ENCODE measurements at regions of chr19 and their contacts with region 1.

Region 1: DNA sequence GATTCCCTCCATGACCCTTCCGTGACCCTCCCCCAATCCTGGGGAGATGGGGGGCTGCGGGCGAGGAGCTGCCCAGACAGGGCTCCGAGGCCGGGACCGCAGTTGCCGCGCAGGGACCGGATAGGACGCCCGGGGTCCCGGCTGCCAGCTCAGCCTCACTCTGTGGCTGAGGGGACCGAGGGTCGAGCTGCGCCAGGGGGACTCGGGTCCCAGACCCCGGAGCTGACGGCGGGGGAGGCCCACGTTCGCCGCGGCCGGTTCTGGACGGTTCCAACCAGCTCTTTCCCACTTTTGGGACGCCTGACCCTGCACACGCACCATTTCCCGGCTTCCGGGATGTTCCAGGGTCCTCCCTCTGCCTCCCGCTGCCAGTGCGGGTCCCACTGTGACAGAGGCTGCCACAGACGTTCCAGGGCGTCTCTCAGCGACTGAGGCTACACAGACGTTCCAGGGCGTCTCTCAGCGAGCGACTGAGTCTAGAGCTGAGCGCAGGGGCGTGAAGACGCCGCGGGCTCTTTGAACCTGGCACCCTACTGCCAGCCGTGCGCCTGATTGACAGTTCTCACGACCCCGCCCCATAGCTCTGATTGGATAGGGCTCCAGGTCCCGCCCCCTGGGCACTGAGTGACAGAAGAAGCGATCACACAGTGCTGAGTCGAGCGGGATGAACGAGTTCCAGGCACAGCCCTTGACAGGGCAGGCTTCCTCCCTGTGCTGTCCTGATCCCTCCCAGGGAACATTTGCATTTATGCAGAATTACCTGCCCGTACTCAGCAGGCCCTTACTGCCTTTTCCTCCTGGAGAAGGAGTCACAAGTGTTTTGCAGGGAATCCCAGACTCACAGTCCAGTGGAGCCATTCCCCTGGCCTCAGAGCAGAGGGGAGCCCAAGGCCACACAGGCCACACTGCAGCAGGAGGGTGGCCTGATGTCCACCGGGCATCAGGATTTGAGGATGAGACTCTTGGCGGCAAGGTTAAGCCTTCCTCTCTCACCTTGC is at the start of gene ZNF563:
- DNase-seq: peak; percentile 97
- ATAC-seq: peak; percentile 96 to 98 (median 98)
- H3K4me3 ChIP-seq: peak within 1 kb of the TSS; percentile 73
- H3K4me3 Mint-ChIP-seq: peak within 1 kb of the TSS; percentile 99
- H3K27ac ChIP-seq: peak within 1 kb of the TSS; percentile 81
- H3K27ac Mint-ChIP-seq: peak within 1 kb of the TSS; percentile 91 to 97
- H3K4me1 ChIP-seq: peaks cover 19% of the 10 kb centered on the region
- H3K4me1 Mint-ChIP-seq: peaks cover 26 to 30% of the 10 kb centered on the region in 2 donors
- H3K27me3 ChIP-seq: no peaks in the 10 kb centered on the region
- H3K27me3 Mint-ChIP-seq: no peaks in the 10 kb centered on the region
- CTCF ChIP-seq: no peak
- total RNA-seq, gene ZNF563: 0.78 to 1.00 (median 0.80) TPM

Region 2: DNA sequence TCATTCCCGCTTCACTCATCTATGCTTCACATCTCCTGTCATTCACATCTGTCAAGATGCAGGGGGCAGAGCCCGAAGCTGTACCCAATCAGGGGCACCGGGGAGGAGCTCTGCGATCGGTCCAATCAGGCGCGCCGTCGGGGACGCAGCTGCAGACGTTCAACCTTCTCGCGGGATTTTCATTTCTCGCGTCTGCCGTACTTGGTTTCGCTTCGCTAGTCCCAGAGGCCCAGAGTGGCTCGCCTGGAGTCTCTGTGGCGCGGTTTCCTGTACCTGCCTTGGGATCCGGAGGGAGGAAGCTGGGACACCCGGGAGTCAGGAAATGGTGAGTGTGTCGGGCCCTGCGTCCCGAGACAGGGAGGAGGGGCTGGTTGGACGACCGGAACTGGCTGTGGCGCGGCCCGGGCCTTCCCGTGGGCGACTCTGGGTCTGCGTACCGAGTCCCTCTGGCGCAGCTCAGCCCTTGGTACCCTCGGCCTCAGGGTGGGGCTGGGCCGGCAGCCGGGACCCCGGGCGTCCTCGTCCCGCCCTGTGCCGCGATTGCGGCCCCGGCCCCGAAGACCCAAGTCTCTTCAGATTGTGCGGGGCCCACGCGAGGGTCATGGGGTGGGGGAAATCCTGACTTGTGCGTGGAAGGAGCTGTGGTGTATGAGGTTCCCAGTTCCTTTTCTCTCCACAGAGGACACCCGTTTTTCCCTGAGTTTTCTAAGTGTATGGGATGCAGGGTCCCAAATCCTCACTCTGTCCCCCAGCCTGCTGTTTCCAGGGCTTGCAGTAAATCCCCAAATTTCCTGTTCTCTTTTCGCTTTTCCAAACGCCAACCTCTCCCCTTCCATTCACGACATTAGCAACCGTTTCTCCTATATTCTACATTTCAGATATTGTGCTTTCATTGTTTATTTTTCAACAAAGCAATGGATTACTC is 170.3 kb before region 1 on chr19 and contains the start of gene ZNF136:
- intact Hi-C with region 1: loop called (anchors 1 kb)
- DNase-seq: peak; percentile 90 to 97
- ATAC-seq: peak; percentile 98 to 99 (median 99)
- H3K4me3 ChIP-seq: peak within 1 kb of the TSS; percentile 98
- H3K4me3 Mint-ChIP-seq: peak within 1 kb of the TSS; percentile 100
- H3K27ac ChIP-seq: peak within 1 kb of the TSS; percentile 98
- H3K27ac Mint-ChIP-seq: peak within 1 kb of the TSS; percentile 97 to 98
- H3K4me1 ChIP-seq: peaks cover 17% of the 10 kb centered on the region
- H3K4me1 Mint-ChIP-seq: peaks cover 38 to 43% of the 10 kb centered on the region in 2 donors
- H3K27me3 ChIP-seq: no peaks in the 10 kb centered on the region
- H3K27me3 Mint-ChIP-seq: no peaks in the 10 kb centered on the region
- CTCF ChIP-seq: no peak
- total RNA-seq, gene ZNF136: 31.5 to 47.7 (median 39.8) TPM

Region 3: GRCh38 chr19:12194827-12195731 is 138.4 kb before region 1 on chr19:
- intact Hi-C with region 1: no loop called
- DNase-seq: peak; percentile 78 to 95
- ATAC-seq: peak; percentile 96 to 98 (median 97)
- H3K4me3 ChIP-seq: peak overlapping the region; percentile 72
- H3K4me3 Mint-ChIP-seq: peak overlapping the region; percentile 91
- H3K27ac ChIP-seq: peak overlapping the region; percentile 77
- H3K27ac Mint-ChIP-seq: peak overlapping the region; percentile 90 to 93
- H3K4me1 ChIP-seq: peaks cover 21% of the 10 kb centered on the region
- H3K4me1 Mint-ChIP-seq: peaks cover 28 to 32% of the 10 kb centered on the region in 2 donors
- H3K27me3 ChIP-seq: no peaks in the 10 kb centered on the region
- H3K27me3 Mint-ChIP-seq: no peaks in the 10 kb centered on the region
- CTCF ChIP-seq: no peak

Region 4: GRCh38 chr19:12294249-12295158 is 39.0 kb before region 1 on chr19 and contains the start of gene ZNF44:
- intact Hi-C with region 1: loop called (anchors 2 kb)
- DNase-seq: peak; percentile 93 to 96
- ATAC-seq: peak; percentile 93 to 99 (median 95)
- H3K4me3 ChIP-seq: peak within 1 kb of the TSS; percentile 85
- H3K4me3 Mint-ChIP-seq: peak within 1 kb of the TSS; percentile 99
- H3K27ac ChIP-seq: peak within 1 kb of the TSS; percentile 91
- H3K27ac Mint-ChIP-seq: peak within 1 kb of the TSS; percentile 89 to 95
- H3K4me1 ChIP-seq: peaks cover 21% of the 10 kb centered on the region
- H3K4me1 Mint-ChIP-seq: peaks cover 33 to 35% of the 10 kb centered on the region in 2 donors
- H3K27me3 ChIP-seq: no peaks in the 10 kb centered on the region
- H3K27me3 Mint-ChIP-seq: no peaks in the 10 kb centered on the region
- CTCF ChIP-seq: no peak
- total RNA-seq, gene ZNF44: 27.3 to 43.1 (median 40.0) TPM

Region 5: GRCh38 chr19:12365236-12366162 is 32.0 kb after region 1 on chr19 and contains the start of gene ZNF442:
- intact Hi-C with region 1: loop called (anchors 1 kb)
- DNase-seq: peak; percentile 75 to 85
- ATAC-seq: peak; percentile 97 to 98 (median 97)
- H3K4me3 ChIP-seq: peak within 1 kb of the TSS; percentile 69
- H3K4me3 Mint-ChIP-seq: peak within 1 kb of the TSS; percentile 95
- H3K27ac ChIP-seq: peak within 1 kb of the TSS; percentile 5
- H3K27ac Mint-ChIP-seq: peak within 1 kb of the TSS; percentile 69 to 94
- H3K4me1 ChIP-seq: peaks cover 13% of the 10 kb centered on the region
- H3K4me1 Mint-ChIP-seq: peaks cover 20 to 27% of the 10 kb centered on the region in 2 donors
- H3K27me3 ChIP-seq: no peaks in the 10 kb centered on the region
- H3K27me3 Mint-ChIP-seq: no peaks in the 10 kb centered on the region
- CTCF ChIP-seq: no peak
- total RNA-seq, gene ZNF442: 1.4 to 3.4 (median 2.8) TPM

Measured in natural killer cell (primary cell).